H1 (cell line): ENCODE measurements at regions of chr21 and their contacts with region 1.

Region 1: DNA sequence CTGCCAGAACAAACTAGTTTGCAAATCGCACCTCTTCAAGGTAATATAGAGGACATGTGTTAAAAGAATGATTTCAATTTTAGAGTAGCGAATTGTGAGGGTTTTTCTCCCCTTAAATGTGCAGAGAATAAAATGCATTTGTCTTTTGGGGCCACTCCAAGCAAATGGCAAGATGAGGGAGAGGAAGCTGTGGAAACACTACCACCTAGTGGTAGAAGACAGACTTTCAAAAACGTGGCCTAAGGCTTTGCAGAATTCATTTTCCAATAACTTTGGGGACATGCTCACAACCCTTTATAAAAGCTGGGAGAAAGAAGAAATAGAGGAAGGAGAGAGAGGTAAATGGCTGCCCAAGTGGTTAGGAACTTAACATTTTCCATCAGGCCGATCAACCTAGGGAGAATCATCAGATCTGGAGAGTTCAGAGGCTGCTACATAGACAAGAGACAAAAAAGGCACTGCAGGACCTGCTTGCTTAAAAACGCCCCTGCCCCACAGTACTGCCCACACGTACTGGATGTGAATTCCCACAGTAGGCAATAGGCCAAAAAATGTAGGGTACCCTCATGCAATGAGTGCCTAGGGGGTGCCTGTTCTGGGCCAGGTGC is 15.7 kb upstream of the RCAN1 start:
- DNase-seq: no peak
- H3K4me3 ChIP-seq: no peak overlapping the region
- H3K27ac ChIP-seq: no peak overlapping the region
- H3K4me1 ChIP-seq: no peaks in the 10 kb centered on the region
- H3K27me3 ChIP-seq: no peaks in the 10 kb centered on the region
- CTCF ChIP-seq: peak in 2 of 3 experiments; percentile 76 to 80; a peak in 3 of 4 replicates
- EP300 ChIP-seq: no peak
- POLR2A ChIP-seq: no peak
- RAD21 ChIP-seq: peak; percentile 95

Region 2: DNA sequence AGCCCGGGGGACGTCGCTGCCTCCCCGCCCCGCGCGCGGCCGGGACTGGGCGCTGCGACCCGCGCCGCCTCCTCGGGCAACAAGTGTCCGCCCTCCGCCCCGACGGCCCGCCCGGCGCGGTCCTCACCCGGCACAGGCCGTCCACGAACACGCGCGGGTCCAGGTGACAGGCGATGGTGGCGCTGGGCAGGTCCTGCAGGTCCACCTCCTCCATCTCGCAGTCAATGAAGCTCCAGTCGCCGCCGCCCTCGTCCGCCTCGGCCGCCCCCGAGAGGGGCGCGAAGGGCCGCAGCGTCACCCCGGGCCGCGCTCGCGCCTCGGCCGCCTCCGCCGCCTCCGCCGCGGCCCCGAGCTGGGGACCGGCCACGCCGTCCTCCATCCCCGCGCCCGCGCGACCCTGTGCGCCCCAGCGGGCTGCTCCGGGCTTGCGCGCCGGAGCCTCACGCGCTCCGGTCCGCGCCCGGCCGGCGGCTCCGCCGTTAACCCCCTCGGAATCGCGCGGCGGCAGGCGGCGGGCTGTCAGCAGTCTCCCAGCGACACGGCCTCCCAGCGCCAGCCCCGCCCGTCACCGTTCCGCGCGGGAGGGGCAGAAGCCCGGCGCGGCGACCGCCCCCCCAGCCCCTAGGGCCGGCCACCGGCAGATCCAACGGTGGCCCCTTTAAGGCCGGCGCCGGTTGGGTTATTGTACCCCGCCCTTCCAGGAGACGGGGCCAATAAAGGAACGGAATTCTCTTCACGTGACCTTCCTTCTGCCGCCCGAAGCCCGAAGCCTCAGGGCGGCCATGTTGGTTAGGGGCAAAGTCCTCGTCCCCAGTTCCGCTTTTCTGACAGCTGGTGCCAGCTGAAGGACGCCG is 15.8 kb before region 1 on chr21 and contains the start of gene RCAN1:
- CTCF ChIA-PET with region 1: interaction called, 23 read pairs
- POLR2A ChIA-PET with region 1: no interaction called
- DNase-seq: peak; percentile 67 to 79
- H3K4me3 ChIP-seq: peak within 1 kb of the TSS; percentile 43 to 69 (median 54)
- H3K27ac ChIP-seq: no peak within 1 kb of the TSS
- H3K4me1 ChIP-seq: peaks cover 0 to 6% (median 2%) of the 10 kb centered on the region in 4 experiments; a peak in 3 of 7 replicates
- H3K27me3 ChIP-seq: peaks cover 7 to 23% (median 16%) of the 10 kb centered on the region in 4 experiments
- CTCF ChIP-seq: no peak
- EP300 ChIP-seq: no peak
- POLR2A ChIP-seq: no peak
- RAD21 ChIP-seq: no peak
- total RNA-seq, gene RCAN1: 5.5 and 6.4 TPM in 2 replicates

Region 3: GRCh38 chr21:34649400-34649799 is 18.8 kb after region 1 on chr21:
- CTCF ChIA-PET with region 1: interaction called, 16 read pairs
- POLR2A ChIA-PET with region 1: no interaction called
- DNase-seq: no peak
- H3K4me3 ChIP-seq: no peak overlapping the region
- H3K27ac ChIP-seq: no peak overlapping the region
- H3K4me1 ChIP-seq: no peaks in the 10 kb centered on the region; a peak in 1 of 7 replicates
- H3K27me3 ChIP-seq: no peaks in the 10 kb centered on the region
- CTCF ChIP-seq: no peak
- EP300 ChIP-seq: no peak
- POLR2A ChIP-seq: no peak
- RAD21 ChIP-seq: no peak

Region 4: DNA sequence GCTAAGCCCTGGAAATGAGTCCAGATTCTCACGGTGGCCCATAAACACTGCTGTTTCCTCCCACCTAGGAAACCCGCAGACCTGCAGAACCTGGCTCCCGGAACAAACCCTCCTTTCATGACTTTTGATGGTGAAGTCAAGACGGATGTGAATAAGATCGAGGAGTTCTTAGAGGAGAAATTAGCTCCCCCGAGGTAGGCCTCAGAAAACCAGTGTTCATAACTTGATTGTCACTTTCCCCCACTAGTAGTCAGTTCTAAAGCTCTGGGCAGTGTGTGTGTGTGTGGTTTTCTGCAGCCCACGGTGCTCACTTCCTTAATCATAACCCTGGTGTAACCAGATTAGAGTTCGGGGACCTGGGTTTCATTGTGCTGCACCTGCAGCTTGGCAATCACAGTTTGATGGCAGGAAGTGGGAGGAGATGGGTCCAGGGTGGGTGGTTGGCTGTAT is 77.3 kb after region 1 on chr21:
- CTCF ChIA-PET with region 1: no interaction called
- POLR2A ChIA-PET with region 1: no interaction called
- DNase-seq: no peak
- H3K4me3 ChIP-seq: no peak overlapping the region
- H3K27ac ChIP-seq: no peak overlapping the region
- H3K4me1 ChIP-seq: no peaks in the 10 kb centered on the region; a peak in 1 of 7 replicates
- H3K27me3 ChIP-seq: no peaks in the 10 kb centered on the region
- CTCF ChIP-seq: no peak
- EP300 ChIP-seq: no peak
- POLR2A ChIP-seq: no peak
- RAD21 ChIP-seq: no peak